Sigmoid colon (tissue), 7 donors: ENCODE measurements at regions of chr7 and their contacts with region 1.

Region 1: GRCh38 chr7:5354460-5355232 is 69.0 kb downstream of the TNRC18 start:
- DNase-seq: peak; percentile 95
- H3K4me3 ChIP-seq: peak overlapping the region in 3 of 4 donors; percentile 8 to 25 (median 20)
- H3K27ac ChIP-seq: peak overlapping the region; percentile 53 to 85 (median 78)
- H3K4me1 ChIP-seq: peaks cover 0 to 100% (median 100%) of the 10 kb centered on the region in 4 donors
- H3K27me3 ChIP-seq: no peaks in the 10 kb centered on the region
- CTCF ChIP-seq: no peak
- EP300 ChIP-seq: peak in 1 of 4 donors; percentile 79
- POLR2A ChIP-seq: no peak

Region 2: DNA sequence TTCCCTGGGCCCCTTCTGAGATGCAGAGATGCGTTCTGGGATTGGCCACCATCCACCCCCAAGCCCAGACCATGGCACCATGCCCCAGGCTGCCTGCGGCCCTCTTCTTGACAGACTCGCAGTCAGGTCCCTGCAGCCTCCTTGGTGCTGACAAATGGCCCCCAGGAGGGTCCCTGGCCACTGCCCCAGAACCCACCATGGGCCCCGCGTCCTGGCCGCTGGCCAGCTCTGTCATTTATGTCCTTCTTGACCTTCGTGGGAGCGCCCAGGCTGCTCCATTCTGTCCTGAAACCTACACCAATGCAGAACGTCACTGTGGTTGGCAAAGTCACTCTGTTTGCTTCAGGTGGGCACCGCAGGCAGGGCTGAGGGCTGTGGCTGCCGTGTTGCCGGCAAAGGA is 111.4 kb before region 1 on chr7:
- intact Hi-C with region 1: loop called (anchors 5 kb)
- DNase-seq: no peak
- H3K4me3 ChIP-seq: no peak overlapping the region
- H3K27ac ChIP-seq: no peak overlapping the region
- H3K4me1 ChIP-seq: peaks cover 0 to 13% (median 10%) of the 10 kb centered on the region in 4 donors
- H3K27me3 ChIP-seq: no peaks in the 10 kb centered on the region
- CTCF ChIP-seq: no peak
- EP300 ChIP-seq: no peak
- POLR2A ChIP-seq: no peak

Region 3: GRCh38 chr7:5396999-5397663 is 42.5 kb after region 1 on chr7:
- intact Hi-C with region 1: loop called (anchors 5 kb)
- DNase-seq: peak; percentile 94
- H3K4me3 ChIP-seq: peak overlapping the region in 3 of 4 donors; percentile 27 to 36 (median 33)
- H3K27ac ChIP-seq: peak overlapping the region; percentile 78 to 85 (median 80)
- H3K4me1 ChIP-seq: peaks cover 0 to 60% (median 54%) of the 10 kb centered on the region in 4 donors
- H3K27me3 ChIP-seq: no peaks in the 10 kb centered on the region
- CTCF ChIP-seq: no peak
- EP300 ChIP-seq: peak in 1 of 4 donors; percentile 22
- POLR2A ChIP-seq: no peak

Region 4: DNA sequence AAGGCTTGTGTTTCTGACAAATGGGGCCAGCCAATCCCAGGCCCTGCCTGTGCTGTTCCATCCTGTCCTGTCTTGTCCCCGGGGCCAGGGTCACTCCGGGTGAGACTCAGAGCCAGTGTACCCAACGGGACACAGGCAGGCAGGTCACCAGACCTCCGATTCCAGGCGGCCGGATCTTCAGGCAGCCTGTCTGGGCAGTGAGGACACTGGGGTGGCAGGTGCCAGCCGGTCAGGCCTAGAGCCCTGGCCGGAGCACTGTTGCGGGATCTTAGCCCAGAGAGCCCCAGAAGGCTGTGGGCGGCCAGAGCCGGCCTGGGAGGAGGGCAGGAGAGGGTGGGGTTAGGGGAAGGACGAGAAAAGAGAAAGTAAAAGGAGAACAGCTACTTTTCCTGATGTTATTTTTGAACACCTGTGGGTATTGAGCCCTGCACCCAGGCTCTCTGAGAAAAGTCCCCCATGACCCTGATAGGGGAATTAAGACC is 203.3 kb after region 1 on chr7:
- intact Hi-C with region 1: no loop called
- DNase-seq: peak; percentile 85
- H3K4me3 ChIP-seq: peak overlapping the region; percentile 11 to 74 (median 68)
- H3K27ac ChIP-seq: peak overlapping the region; percentile 99 to 100 (median 100)
- H3K4me1 ChIP-seq: peaks cover 0 to 67% (median 58%) of the 10 kb centered on the region in 4 donors
- H3K27me3 ChIP-seq: no peaks in the 10 kb centered on the region
- CTCF ChIP-seq: no peak
- EP300 ChIP-seq: no peak
- POLR2A ChIP-seq: no peak

Region 5: DNA sequence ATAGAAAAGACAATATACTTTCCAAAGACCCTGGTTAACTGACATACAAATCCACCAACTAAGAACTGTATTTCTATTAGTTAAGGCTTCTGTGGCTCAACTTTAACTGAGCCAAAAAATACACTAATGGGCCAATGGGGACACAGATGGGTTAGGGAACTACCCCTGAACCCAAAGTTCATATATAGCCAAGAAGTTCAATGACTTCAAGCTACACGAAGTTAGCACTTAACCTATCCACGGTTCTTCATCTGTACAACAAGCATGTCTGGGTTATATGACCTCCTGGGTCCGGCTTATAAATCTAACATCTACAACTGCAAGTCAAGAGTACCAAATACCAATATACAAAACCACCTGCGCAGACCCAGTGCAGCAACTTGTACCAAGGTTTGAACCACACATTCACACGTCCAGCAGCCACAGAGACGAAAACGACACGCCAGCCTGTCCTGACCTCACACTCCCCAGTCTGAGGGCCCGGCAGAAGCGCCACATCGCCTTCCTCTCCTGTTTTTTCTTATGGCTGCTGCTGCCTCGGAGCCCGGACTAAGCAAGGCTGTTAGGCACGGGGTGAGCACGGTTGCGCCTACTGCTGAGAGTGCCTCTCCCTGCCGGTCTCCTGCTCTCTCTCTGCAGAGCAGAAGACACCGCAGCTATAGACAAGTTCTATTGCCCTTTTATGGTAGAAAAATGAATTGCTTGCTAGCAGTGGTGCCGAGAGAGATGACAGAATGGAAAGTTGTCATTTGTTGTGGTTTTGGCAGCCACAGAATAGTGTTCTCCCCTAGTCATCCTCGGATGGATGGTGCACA is 340.5 kb after region 1 on chr7:
- intact Hi-C with region 1: loop called (anchors 10 kb)
- DNase-seq: peak; percentile 90
- H3K4me3 ChIP-seq: peak overlapping the region; percentile 37 to 60 (median 44)
- H3K27ac ChIP-seq: peak overlapping the region; percentile 93 to 99 (median 94)
- H3K4me1 ChIP-seq: peaks cover 0 to 100% (median 95%) of the 10 kb centered on the region in 4 donors
- H3K27me3 ChIP-seq: no peaks in the 10 kb centered on the region
- CTCF ChIP-seq: no peak
- EP300 ChIP-seq: peak; percentile 74 to 95 (median 88)
- POLR2A ChIP-seq: peak; percentile 88 to 89